Aorta (tissue), 5 donors: ENCODE measurements at regions of chr11 and their contacts with region 1.

Region 1: GRCh38 chr11:29333993-29334775 is 682.6 kb downstream of the KCNA4 start:
- DNase-seq: no peak
- ATAC-seq: no peak
- H3K4me3 ChIP-seq: no peak overlapping the region
- H3K27ac ChIP-seq: no peak overlapping the region
- H3K4me1 ChIP-seq: no peaks in the 10 kb centered on the region
- H3K27me3 ChIP-seq: no peaks in the 10 kb centered on the region

Region 2: DNA sequence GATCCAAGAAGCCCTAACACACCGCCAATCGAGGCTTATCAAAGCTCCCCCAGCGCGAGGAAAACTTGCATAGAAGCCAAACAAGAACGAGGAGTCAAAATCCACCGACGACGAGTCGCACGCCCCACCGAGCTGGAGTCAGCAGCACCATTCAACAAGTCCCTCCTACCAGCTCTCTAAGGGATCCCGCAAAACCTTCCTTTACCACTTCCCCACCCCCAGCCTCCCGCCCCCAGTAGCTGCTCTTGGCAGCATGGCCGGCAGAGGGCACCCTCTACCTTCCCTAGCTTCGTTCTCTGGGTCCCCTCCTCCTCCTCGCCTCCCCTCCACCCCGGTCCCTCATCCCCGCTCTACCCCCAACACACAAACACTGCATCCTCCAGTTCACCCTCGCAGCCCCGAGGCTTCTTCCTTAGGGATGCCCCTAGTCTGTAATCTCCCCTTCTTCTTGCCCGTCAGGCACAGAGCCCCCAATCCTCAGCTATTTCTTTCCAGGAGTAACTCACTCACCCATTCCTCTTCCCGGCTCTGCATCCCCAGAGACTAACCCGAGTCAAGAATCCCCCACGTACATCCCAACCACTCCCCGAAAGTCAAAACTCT is 1635.2 kb before region 1 on chr11:
- intact Hi-C with region 1: loop called (anchors 5 kb)
- DNase-seq: peak; percentile 75 to 92
- ATAC-seq: peak; percentile 92
- H3K4me3 ChIP-seq: peak overlapping the region; percentile 55 to 95
- H3K27ac ChIP-seq: no peak overlapping the region
- H3K4me1 ChIP-seq: peaks cover 0 to 5% of the 10 kb centered on the region in 2 donors
- H3K27me3 ChIP-seq: no peaks in the 10 kb centered on the region

Region 3: DNA sequence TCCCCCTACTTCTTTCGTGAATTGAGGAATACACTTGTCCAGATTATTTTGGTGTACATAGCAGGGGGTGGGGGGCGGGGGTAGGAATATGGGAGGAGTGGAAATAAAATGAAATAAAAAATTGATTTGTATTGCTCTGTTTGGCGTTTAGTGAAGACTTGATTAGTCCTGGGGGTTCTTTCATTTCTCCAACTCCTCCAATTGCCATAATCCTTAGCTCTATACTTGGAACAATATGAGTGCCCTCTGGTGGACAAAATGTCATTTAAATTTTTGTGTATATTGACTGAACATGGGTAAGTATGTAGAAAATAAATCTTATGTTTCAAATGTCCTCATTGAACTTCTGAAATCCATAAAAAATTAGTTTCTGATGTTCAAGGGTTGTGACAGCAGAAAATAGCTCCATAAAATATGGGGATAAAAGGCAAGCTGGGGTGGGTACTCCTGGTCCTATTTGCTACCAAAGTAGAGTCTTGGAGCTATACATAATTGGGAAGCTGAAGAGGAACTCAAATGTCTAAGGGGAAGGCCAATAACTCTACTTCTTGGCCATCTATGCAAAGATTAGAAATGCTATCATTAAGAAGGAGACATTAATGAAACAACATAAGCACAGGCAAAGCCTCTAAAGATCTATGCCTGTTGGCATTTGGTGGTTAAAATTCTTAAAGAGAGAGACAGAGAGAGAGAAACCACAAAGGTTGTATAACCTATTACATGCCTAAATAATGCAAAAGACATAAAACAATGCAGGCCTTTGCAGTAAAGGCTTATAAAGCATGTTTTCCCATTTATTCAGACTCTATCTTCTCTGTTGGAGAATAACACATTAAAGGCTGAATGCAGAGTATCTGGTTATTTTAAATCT is 804.4 kb before region 1 on chr11:
- intact Hi-C with region 1: loop called in 1 of 2 experiments (anchors 2 kb)
- DNase-seq: no peak
- ATAC-seq: no peak
- H3K4me3 ChIP-seq: no peak overlapping the region
- H3K27ac ChIP-seq: no peak overlapping the region
- H3K4me1 ChIP-seq: no peaks in the 10 kb centered on the region
- H3K27me3 ChIP-seq: no peaks in the 10 kb centered on the region

Region 4: GRCh38 chr11:29159552-29160465 is 174.4 kb before region 1 on chr11:
- intact Hi-C with region 1: loop called in 1 of 2 experiments (anchors 5 kb)
- DNase-seq: peak in 1 of 2 donors; percentile 48
- ATAC-seq: no peak
- H3K4me3 ChIP-seq: no peak overlapping the region
- H3K27ac ChIP-seq: no peak overlapping the region
- H3K4me1 ChIP-seq: no peaks in the 10 kb centered on the region
- H3K27me3 ChIP-seq: no peaks in the 10 kb centered on the region